Activated CD4-positive, alpha-beta memory T cell treated with anti-CD3 and anti-CD28 coated beads for 36 hours (primary cell): ENCODE measurements at regions of chr2 and their contacts with region 1.

Region 1: DNA sequence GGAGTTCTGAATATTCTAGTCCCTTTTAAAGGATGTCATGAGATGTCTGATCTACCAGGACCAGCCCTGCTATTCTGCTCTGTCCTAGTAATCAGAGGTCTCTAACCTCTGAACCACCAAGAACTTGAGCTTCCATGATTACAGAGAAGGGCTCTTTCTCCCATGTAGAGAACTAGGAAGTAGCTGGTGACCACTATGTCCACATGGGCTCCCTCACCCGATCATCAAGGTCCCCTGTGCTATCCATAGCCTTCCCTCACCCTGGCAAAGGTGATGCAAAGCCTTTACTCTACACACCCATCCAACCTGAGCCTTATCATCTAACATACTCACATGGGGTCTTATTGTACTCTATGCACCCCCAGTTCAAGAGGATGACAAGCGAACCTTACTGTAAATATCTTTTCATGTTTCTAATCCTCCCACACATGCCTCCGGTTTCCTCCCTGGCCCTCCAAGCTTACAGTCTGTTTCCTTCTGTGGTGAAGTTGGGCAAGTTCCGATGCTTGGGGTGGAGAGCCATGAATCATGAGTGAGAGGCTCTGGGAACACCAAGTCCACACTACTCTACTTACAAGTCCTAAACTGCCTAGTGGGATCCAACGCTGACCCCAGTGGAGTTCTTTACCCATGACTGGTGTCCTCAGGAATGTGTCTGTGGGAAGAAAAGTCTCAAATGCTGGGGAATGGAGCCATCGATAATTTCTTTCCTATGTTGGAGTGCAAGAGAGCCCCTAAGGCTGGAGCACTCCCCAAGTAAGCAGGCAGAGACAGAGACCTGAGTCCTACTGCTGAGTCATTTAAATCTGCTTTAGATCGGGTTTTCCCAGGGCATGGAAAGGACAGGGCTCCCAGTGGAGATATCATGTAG is 73.3 kb upstream of the KLF7 start:
- DNase-seq: peak; percentile 69
- H3K4me3 Mint-ChIP-seq: no peak overlapping the region
- H3K27ac Mint-ChIP-seq: no peak overlapping the region
- H3K4me1 Mint-ChIP-seq: peaks cover 25% of the 10 kb centered on the region
- H3K27me3 Mint-ChIP-seq: peaks cover 1% of the 10 kb centered on the region

Region 2: GRCh38 chr2:206230060-206230762 is 1008.9 kb before region 1 on chr2:
- CTCF ChIA-PET with region 1: no interaction called
- POLR2A ChIA-PET with region 1: no interaction called
- intact Hi-C with region 1: no loop called
- DNase-seq: no peak
- H3K4me3 Mint-ChIP-seq: no peak overlapping the region
- H3K27ac Mint-ChIP-seq: no peak overlapping the region
- H3K4me1 Mint-ChIP-seq: peaks cover 10% of the 10 kb centered on the region
- H3K27me3 Mint-ChIP-seq: peaks cover 10% of the 10 kb centered on the region

Region 3: GRCh38 chr2:207121784-207122183 is 117.3 kb before region 1 on chr2:
- CTCF ChIA-PET with region 1: no interaction called
- POLR2A ChIA-PET with region 1: no interaction called
- intact Hi-C with region 1: loop called (anchors 5 kb)
- DNase-seq: no peak
- H3K4me3 Mint-ChIP-seq: no peak overlapping the region
- H3K27ac Mint-ChIP-seq: peak overlapping the region; percentile 55
- H3K4me1 Mint-ChIP-seq: peaks cover 61% of the 10 kb centered on the region
- H3K27me3 Mint-ChIP-seq: no peaks in the 10 kb centered on the region

Region 4: GRCh38 chr2:207258263-207258991 is 19.4 kb after region 1 on chr2:
- CTCF ChIA-PET with region 1: no interaction called
- POLR2A ChIA-PET with region 1: no interaction called
- intact Hi-C with region 1: no loop called
- DNase-seq: no peak
- H3K4me3 Mint-ChIP-seq: no peak overlapping the region
- H3K27ac Mint-ChIP-seq: no peak overlapping the region
- H3K4me1 Mint-ChIP-seq: peaks cover 27% of the 10 kb centered on the region
- H3K27me3 Mint-ChIP-seq: peaks cover 5% of the 10 kb centered on the region

Region 5: GRCh38 chr2:207283356-207283755 is 44.3 kb after region 1 on chr2:
- CTCF ChIA-PET with region 1: no interaction called
- POLR2A ChIA-PET with region 1: interaction called, 3 read pairs
- intact Hi-C with region 1: loop called (anchors 1 kb)
- DNase-seq: peak; percentile 34
- H3K4me3 Mint-ChIP-seq: no peak overlapping the region
- H3K27ac Mint-ChIP-seq: peak overlapping the region; percentile 65
- H3K4me1 Mint-ChIP-seq: peaks cover 67% of the 10 kb centered on the region
- H3K27me3 Mint-ChIP-seq: no peaks in the 10 kb centered on the region

Region 6: DNA sequence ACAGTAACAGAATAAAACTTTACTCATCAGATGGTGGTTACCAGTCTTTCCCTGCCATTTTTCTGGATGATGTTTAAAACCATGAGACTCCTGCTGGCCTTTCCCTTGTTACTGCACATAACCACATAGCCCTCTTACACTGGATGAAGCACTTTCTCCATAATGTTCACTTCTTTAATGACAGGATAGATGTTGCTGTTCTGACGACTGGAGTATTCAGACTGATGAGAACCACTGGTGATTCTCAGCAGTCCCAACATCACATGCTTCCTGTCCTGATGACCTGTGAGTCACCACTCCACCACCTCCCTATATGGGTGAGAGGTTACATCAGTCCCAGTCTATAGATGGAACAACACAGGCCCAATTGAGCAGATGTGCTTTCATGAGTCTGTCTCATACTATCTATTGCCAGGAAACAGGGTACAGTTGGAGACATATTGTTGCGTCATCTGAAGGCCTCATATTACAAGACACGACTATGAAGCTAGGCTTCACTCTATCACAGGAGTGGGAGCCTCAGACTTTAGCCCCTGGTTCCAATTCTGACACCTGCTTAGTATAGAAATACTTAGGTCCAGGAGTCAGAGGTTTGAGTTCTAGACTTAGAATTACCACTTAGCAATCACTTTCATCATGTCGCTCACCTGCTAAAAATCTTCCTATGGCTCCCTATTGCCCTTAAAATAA is 72.4 kb after region 1 on chr2:
- CTCF ChIA-PET with region 1: no interaction called
- POLR2A ChIA-PET with region 1: no interaction called
- intact Hi-C with region 1: loop called (anchors 1 kb)
- DNase-seq: peak; percentile 76
- H3K4me3 Mint-ChIP-seq: peak overlapping the region; percentile 3
- H3K27ac Mint-ChIP-seq: peak overlapping the region; percentile 79
- H3K4me1 Mint-ChIP-seq: peaks cover 28% of the 10 kb centered on the region
- H3K27me3 Mint-ChIP-seq: no peaks in the 10 kb centered on the region

Region 7: DNA sequence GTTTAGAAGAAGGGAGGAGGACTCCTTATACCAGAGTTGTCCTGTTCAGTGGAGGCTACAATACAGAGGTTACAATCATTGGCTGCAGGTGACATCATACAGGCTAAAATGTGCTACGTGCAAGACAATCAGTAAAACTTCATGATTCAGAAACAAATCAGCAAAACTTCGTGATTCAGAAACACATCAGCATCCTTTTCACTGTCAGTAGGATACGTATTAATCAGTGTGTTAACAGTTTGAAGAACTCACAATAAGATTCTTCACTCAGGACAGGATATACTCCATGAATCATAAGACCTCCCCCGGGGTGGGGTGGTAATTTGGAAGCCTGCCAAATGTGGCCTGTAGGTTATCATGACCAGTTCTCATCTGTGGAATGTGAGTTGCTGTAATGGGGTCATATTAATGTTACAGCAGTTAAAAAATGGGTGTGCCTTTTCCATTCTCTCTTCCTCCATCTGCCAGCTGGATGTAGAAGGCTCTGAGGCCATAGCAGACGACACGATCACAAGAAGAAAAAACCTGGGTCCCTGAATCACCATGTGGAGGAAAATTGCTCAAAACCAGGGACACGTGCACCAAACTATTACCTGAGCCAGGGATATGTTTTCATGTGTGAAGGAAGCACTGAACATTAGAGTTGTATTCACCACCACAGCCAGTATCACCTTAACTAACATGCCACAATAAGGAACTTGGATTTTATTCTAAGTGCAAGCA is 155.9 kb after region 1 on chr2:
- CTCF ChIA-PET with region 1: no interaction called
- POLR2A ChIA-PET with region 1: no interaction called
- intact Hi-C with region 1: loop called (anchors 1 kb)
- DNase-seq: peak; percentile 86
- H3K4me3 Mint-ChIP-seq: no peak overlapping the region
- H3K27ac Mint-ChIP-seq: peak overlapping the region; percentile 85
- H3K4me1 Mint-ChIP-seq: peaks cover 17% of the 10 kb centered on the region
- H3K27me3 Mint-ChIP-seq: peaks cover 1% of the 10 kb centered on the region